Transverse colon (tissue), 4 donors: ENCODE measurements at regions of chr2 and their contacts with region 1.

Region 1: GRCh38 chr2:70651014-70651413 is 97.4 kb upstream of the TGFA start:
- DNase-seq: no peak
- H3K4me3 ChIP-seq: no peak overlapping the region
- H3K27ac ChIP-seq: no peak overlapping the region
- H3K4me1 ChIP-seq: peaks cover 0 to 7% (median 0%) of the 10 kb centered on the region in 4 donors
- H3K27me3 ChIP-seq: peaks cover 36% of the 10 kb centered on the region
- CTCF ChIP-seq: no peak
- EP300 ChIP-seq: no peak
- POLR2A ChIP-seq: no peak

Region 2: GRCh38 chr2:68789603-68790002 is 1861.4 kb before region 1 on chr2:
- in situ Hi-C with region 1: no loop called
- intact Hi-C with region 1: loop called (anchors 5 kb)
- DNase-seq: no peak
- H3K4me3 ChIP-seq: no peak overlapping the region
- H3K27ac ChIP-seq: no peak overlapping the region
- H3K4me1 ChIP-seq: peaks cover 0 to 5% (median under 1%) of the 10 kb centered on the region in 4 donors
- H3K27me3 ChIP-seq: no peaks in the 10 kb centered on the region
- CTCF ChIP-seq: no peak
- EP300 ChIP-seq: no peak
- POLR2A ChIP-seq: no peak